Activated naive CD8-positive, alpha-beta T cell treated with anti-CD3 and anti-CD28 coated beads, Interleukin-2, amount 10 ng/mL, durations not matched to agents 7 days and 5 days (primary cell): ENCODE measurements at regions of chr14 and their contacts with region 1.

Region 1: DNA sequence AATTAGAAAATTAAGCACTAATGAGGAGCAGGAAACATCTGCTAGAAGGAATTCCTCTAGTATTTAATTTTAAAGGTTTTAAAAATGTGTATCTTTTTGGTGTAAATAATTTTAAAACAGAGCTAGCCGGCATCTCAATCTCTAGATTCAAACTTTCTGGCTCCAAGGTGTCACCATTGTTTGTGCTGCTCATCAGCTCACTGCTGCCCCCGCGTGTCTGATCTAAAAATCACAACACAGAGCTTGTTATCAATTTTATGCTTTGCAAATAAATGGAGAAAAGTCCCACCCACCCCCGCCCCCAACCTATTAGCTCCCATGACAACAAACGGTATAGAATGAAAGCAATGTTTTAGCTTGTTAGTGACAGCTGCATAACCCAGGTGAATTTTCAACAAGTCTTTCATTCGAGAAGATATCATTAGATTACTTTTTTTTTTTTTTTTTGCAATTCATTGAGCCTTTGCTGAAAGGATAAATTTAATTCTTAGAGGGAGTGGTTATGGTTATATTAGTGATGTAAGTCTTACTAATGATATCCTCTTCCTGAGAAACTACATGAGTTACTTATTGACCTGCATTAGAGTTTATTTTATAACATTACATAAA is 11.3 kb upstream of the ABHD12B start:
- DNase-seq: peak; percentile 86
- ATAC-seq: peak; percentile 51
- H3K4me3 Mint-ChIP-seq: peak overlapping the region; percentile 86
- H3K27ac Mint-ChIP-seq: peak overlapping the region; percentile 92
- H3K4me1 Mint-ChIP-seq: peaks cover 17% of the 10 kb centered on the region
- H3K27me3 Mint-ChIP-seq: peaks cover 6% of the 10 kb centered on the region

Region 2: DNA sequence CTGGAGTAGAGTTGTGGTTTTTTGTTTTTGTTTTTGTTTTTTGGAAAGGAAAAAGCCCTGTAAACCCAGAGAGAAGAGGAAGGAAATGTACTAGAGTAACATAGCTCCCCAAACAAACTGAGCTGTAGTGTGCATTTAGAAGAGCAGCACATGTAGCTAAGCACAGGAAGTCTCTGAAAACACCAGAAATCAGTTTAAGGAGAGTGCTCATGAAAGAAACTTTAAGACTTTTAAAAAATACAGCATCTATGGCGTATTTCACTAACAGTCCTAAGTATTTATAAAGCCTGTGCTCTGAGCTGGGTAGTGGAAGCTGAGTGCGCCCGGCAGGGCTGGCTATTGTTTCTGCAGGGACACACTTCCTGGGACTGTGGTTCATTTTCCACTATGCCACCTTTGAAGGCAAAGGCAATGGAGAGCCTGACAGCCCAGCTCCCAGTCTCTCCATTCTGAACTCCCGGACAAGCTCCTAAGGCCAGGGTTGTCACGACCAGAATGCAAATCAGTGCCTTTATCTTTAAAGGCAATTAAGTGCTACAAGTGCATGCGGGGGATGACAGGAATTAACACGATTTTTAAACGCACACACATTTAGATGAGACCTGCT is 75.0 kb before region 1 on chr14:
- POLR2A ChIA-PET with region 1: interaction called, 12 read pairs
- DNase-seq: no peak
- ATAC-seq: peak; percentile 57
- H3K4me3 Mint-ChIP-seq: peak overlapping the region; percentile 58
- H3K27ac Mint-ChIP-seq: peak overlapping the region; percentile 81
- H3K4me1 Mint-ChIP-seq: peaks cover 49% of the 10 kb centered on the region
- H3K27me3 Mint-ChIP-seq: no peaks in the 10 kb centered on the region

Region 3: GRCh38 chr14:50792051-50792477 is 68.5 kb before region 1 on chr14:
- POLR2A ChIA-PET with region 1: interaction called, 12 read pairs
- DNase-seq: peak; percentile 38
- ATAC-seq: peak; percentile 62
- H3K4me3 Mint-ChIP-seq: peak overlapping the region; percentile 65
- H3K27ac Mint-ChIP-seq: peak overlapping the region; percentile 85
- H3K4me1 Mint-ChIP-seq: peaks cover 50% of the 10 kb centered on the region
- H3K27me3 Mint-ChIP-seq: no peaks in the 10 kb centered on the region

Region 4: DNA sequence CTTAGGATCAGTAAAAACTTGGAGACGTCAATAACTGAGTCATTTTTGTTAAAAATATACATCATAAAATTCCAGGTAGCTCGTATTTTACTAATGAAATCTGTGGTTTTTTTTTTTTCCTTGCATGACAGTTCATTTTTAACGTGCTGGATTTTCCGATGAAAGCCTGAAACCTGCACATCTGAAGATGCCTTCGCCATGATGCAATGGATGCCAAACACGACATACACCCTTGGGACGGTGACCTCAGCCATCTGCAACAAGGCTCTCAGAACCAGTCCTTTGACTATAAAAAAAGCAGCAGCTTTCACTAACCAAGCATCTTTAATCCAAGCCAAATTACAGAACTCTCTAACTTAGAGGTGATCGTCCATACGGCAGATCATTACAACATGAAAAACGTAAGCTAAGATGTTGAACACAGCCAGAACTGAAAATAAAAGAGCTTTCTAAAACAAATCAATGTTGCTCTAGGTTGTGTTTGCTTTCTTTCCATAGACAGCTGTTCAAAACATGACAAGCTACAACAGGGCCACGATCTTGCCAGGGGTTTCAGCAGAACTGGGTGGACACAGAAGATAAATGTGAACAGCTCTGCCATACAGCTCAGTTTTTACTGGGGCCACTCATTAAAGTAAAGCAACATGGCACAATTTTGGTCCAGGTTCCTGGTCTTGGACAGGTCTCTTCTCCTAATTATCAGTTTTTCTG is 37.4 kb before region 1 on chr14:
- POLR2A ChIA-PET with region 1: interaction called, 22 read pairs
- DNase-seq: no peak
- ATAC-seq: no peak
- H3K4me3 Mint-ChIP-seq: peak overlapping the region; percentile 78
- H3K27ac Mint-ChIP-seq: peak overlapping the region; percentile 92
- H3K4me1 Mint-ChIP-seq: peaks cover 62% of the 10 kb centered on the region
- H3K27me3 Mint-ChIP-seq: no peaks in the 10 kb centered on the region

Region 5: GRCh38 chr14:50830932-50831725 is 29.5 kb before region 1 on chr14 and contains the start of gene NIN:
- POLR2A ChIA-PET with region 1: interaction called, 30 read pairs
- DNase-seq: peak; percentile 86
- ATAC-seq: peak; percentile 89
- H3K4me3 Mint-ChIP-seq: peak within 1 kb of the TSS; percentile 96
- H3K27ac Mint-ChIP-seq: peak within 1 kb of the TSS; percentile 95
- H3K4me1 Mint-ChIP-seq: peaks cover 35% of the 10 kb centered on the region
- H3K27me3 Mint-ChIP-seq: peaks cover 9% of the 10 kb centered on the region
- total RNA-seq, gene NIN: 106 to 113 TPM

Region 6: DNA sequence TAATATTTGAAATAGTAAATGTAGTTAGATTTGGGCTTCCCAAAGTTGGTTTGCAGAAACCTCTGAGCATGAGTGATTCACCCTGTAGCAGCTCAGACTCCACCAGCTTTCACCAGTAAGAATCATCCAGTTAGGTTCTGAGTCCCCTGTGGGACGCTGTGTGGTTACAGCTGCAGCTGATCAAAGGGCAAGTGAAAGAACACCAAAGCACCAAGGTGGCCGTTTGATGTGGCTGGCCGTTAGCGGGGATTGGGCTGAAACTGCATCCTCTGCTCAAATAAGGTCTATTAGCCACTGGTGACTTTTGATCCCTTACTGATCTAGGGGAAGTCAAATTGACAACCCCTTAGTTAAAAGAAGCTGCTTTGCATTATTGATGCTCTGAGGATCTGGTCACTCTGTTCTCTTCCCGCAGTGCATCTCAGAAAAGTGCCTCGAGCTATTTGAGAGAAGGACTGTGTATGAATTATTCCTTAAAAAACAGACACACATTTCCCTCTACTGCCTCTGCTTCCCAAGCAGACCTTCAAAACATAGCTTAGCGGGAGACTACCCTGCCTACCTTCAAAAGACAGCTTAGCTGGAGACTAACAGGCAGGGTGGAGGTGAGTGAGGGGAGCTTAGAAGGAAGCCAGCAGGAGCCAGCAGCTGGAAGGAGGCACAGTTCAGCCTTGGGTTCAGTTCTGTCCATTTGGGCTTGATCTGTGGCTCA is 14.9 kb after region 1 on chr14:
- POLR2A ChIA-PET with region 1: interaction called, 10 read pairs
- DNase-seq: peak; percentile 73
- ATAC-seq: peak; percentile 95
- H3K4me3 Mint-ChIP-seq: peak overlapping the region; percentile 75
- H3K27ac Mint-ChIP-seq: no peak overlapping the region
- H3K4me1 Mint-ChIP-seq: peaks cover 32% of the 10 kb centered on the region
- H3K27me3 Mint-ChIP-seq: peaks cover 86% of the 10 kb centered on the region

Region 7: DNA sequence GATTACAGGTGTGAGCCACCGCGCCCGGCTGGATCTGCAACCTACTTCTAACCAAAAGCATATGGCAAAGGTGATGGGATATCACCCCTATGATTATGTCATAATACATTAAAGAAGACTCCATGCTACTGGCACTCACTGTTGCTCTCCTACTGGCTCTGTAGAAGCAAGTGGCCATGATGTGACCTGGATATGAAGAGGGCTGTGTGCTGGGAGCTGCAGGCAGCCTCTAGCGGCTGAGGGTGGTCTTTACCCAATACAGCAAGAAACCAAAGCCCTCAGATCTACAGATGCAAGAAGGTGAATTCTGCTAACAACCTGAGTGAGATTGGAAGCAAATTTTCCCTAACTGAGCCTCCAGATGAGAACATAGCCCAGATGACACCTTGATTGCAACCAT is 268.5 kb after region 1 on chr14:
- POLR2A ChIA-PET with region 1: no interaction called
- DNase-seq: no peak
- ATAC-seq: no peak
- H3K4me3 Mint-ChIP-seq: no peak overlapping the region
- H3K27ac Mint-ChIP-seq: no peak overlapping the region
- H3K4me1 Mint-ChIP-seq: no peaks in the 10 kb centered on the region
- H3K27me3 Mint-ChIP-seq: peaks cover 8% of the 10 kb centered on the region